ENCODE measurements at regions of chr1 and their contacts with region 1.

Region 1: DNA sequence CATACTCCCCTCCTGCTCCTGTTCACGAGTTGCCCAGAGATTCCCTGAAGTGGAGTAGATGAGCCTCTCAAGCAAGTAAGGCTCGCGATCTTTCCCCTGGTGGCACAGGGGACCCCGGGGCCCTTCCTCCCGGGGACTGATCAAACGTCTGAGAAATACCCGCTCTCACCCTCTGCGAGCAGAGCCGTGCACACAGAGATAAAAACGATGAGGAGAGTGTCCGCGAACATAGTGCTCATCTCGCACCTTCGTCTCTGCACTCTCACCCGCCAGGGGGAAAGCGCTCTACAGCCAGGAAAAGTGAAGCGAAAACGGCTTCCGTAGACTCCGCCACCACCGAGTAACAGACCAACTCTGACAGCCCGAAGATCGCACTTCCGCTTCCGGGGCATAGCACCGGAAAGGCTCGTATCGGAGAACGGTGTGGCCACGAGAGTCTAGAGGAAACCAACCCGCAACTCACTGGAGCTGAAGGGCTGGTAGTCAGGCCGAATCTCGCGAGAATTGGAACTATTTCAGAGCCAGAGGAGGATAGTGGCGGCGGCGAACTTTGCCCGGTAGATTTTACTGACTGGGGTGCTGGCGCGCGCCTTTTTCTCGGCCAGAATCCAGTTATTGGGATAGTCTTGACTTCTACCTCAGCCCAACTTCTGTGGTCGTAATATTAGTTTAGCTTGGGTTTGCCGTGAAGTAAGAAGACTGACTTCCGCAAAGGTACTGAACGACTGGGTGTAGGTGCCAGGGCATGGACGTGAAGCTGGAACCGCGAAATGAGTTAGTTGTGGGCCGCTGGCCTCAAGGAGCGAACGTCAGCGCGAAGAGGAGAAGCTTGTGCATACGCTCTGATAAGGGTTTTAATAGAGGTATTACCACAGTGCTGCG is at the start of gene TMCO1:
- DNase-seq: peak; percentile 95
- H3K4me3 Mint-ChIP-seq: peak within 1 kb of the TSS; percentile 97
- H3K27ac Mint-ChIP-seq: peak within 1 kb of the TSS; percentile 97
- H3K4me1 Mint-ChIP-seq: peaks cover 45% of the 10 kb centered on the region
- H3K27me3 Mint-ChIP-seq: no peaks in the 10 kb centered on the region
- CTCF ChIP-seq: no peak
- total RNA-seq, gene TMCO1: 145 and 157 TPM in 2 replicates

Region 2: DNA sequence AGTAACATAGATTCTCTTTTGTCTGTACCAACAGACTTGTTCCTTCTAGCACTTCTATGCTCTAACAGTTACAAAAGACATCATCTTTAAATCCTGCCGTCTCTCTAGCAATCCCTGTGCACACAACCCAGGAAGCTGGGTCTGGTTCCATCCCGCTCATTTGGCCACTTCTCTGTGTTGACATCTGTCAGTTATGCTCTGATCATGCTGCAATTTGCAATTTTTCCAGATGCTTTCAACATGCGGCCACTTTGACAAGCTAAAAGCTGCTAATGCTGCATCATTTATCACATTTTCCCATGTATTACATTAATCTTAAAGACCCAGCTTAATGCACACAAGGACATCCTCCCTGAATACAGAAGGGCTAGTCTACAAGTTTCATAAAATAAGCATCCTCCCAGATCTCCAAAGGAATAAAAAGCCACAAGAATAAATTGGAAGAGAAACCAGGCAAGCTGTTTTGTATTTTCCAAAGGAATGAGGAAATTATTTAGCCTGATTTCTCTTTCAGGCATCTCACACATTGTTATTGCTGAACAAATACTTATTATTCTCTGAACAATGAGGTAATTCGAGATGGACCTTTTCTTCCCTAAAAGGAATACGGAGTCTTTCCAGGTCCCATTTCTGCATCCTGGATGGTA is 244.0 kb before region 1 on chr1:
- CTCF ChIA-PET with region 1: no interaction called
- intact Hi-C with region 1: no loop called
- DNase-seq: no peak
- H3K4me3 Mint-ChIP-seq: no peak overlapping the region
- H3K27ac Mint-ChIP-seq: no peak overlapping the region
- H3K4me1 Mint-ChIP-seq: no peaks in the 10 kb centered on the region
- H3K27me3 Mint-ChIP-seq: peaks cover 75% of the 10 kb centered on the region
- CTCF ChIP-seq: no peak

Region 3: GRCh38 chr1:165914136-165914798 is 145.5 kb after region 1 on chr1:
- CTCF ChIA-PET with region 1: no interaction called
- intact Hi-C with region 1: loop called (anchors 2 kb)
- DNase-seq: peak; percentile 75
- H3K4me3 Mint-ChIP-seq: no peak overlapping the region
- H3K27ac Mint-ChIP-seq: no peak overlapping the region
- H3K4me1 Mint-ChIP-seq: peaks cover 22% of the 10 kb centered on the region
- H3K27me3 Mint-ChIP-seq: no peaks in the 10 kb centered on the region
- CTCF ChIP-seq: peak; percentile 72